ENCODE measurements at regions of chr6 and their contacts with region 1.

Region 1: GRCh38 chr6:22025468-22026160 is 271.2 kb downstream of the PRL start:
- DNase-seq: peak in 2 of 3 donors; percentile 49 to 52
- ATAC-seq: peak; percentile 58 to 91
- H3K4me3 ChIP-seq: no peak overlapping the region
- H3K27ac ChIP-seq: no peak overlapping the region
- H3K4me1 ChIP-seq: no peaks in the 10 kb centered on the region
- H3K27me3 ChIP-seq: no peaks in the 10 kb centered on the region

Region 2: DNA sequence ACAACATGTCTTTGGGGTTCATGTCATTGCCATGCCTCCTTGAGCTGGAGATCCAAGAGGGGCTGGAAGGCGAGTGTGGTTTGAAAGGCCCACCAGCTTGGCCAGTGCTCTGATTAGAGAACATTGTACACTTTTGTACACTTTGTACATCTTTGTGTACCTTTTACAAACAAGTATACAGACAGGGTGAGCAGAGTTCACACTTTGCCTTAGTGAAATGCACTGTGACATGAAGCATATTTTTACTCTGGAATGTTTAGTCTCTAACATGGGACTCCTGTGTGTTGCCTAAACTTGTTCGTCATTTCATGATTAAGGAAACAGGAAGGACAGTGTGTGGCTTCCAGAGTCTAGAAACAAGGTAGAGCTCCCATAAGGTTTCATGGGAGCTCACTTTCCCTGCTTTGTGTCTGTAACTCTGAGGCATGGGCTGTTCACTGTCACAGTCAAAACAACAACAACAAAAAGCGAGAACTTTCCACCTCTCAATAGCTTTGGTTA is 657.9 kb before region 1 on chr6:
- intact Hi-C with region 1: no loop called
- DNase-seq: no peak
- ATAC-seq: no peak
- H3K4me3 ChIP-seq: no peak overlapping the region
- H3K27ac ChIP-seq: no peak overlapping the region
- H3K4me1 ChIP-seq: no peaks in the 10 kb centered on the region
- H3K27me3 ChIP-seq: no peaks in the 10 kb centered on the region

Region 3: DNA sequence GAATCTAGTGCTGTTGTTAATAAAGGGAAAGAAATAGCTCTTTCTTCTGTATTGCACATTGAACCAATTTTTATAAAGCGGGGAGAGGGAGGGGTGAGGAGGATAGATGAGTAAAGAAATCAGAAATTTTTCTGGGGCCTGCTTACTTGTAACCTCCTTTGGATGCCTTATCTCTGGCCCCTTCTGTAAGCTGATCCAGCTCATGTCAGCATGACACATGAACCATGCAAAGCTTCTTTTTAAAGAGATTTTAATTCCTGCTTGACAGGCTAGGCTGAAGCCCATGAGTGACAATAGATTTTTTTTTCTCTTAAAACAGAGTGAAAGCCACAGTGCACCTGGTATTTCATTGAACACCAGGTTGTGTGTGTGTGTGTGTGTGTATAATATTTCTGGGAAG is 54.1 kb before region 1 on chr6:
- intact Hi-C with region 1: no loop called
- DNase-seq: no peak
- ATAC-seq: no peak
- H3K4me3 ChIP-seq: no peak overlapping the region
- H3K27ac ChIP-seq: no peak overlapping the region
- H3K4me1 ChIP-seq: peaks cover 1% of the 10 kb centered on the region
- H3K27me3 ChIP-seq: no peaks in the 10 kb centered on the region

Region 4: DNA sequence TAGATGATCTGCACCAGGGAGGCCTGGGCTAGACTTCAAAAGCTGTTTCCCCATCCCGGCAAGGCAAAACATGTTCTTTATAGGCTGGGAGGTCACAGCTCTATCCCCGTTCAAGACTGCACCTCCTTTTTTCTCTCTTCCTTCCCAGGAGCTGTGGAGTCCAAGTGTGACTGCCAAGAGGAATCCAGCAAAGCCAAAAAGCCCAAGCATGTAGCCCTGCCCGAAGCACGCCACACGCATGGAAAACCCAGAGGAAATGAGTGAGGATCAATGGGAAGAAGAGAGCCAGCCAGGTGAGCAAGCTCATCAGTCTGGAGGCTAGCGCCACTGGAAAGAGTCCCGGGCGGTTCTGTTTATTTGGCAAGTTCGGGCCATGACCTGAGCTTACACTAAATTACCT is 30.8 kb after region 1 on chr6:
- intact Hi-C with region 1: loop called in 1 of 4 experiments (anchors 2 kb)
- DNase-seq: peak in 2 of 3 donors; percentile 16 to 58
- ATAC-seq: peak; percentile 28 to 64
- H3K4me3 ChIP-seq: no peak overlapping the region
- H3K27ac ChIP-seq: peak overlapping the region; percentile 27
- H3K4me1 ChIP-seq: peaks cover 6% of the 10 kb centered on the region
- H3K27me3 ChIP-seq: no peaks in the 10 kb centered on the region